ENCODE measurements at regions of chr2 and their contacts with region 1.

Region 1: DNA sequence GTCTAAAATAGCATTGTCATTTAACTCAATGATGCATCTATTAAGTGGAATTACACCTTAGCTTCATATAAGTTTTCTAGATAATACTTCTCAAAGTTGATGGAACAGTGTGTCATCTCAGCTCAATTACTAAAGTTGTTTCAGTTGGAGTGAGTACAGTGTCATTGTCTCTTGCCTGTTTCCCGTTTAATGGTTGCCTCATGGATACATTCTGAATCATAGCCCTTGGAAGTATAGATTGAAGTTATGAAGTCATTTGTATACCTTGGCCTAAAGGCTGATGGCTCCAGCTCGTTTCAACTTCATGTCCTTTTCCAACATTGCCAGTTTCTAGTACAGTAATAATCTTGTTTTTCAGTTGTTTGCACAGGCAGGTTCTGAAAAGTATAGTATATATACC is 130.5 kb upstream of the NOSTRIN start:
- DNase-seq: no peak
- CTCF ChIP-seq: no peak

Region 2: DNA sequence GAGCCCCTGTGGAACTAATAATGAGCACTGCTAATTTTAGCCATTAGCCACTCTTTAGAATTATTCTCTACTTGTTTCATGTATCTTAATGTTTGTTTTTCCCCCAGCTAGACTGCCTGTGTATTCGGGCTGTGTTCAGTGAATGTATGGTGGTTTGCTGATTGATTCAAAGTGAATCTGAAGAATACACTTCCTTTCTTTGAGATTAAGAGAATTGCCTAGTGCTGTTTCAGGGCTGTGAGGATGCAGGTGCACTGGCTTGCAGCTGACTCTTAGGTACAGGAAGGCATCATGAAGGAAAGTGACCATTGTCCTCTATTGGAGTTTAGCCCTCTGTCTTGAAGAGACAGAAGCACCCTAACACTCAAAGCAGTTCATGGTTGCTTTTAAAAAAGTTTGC is 77.2 kb before region 1 on chr2:
- CTCF ChIA-PET with region 1: no interaction called
- POLR2A ChIA-PET with region 1: no interaction called
- DNase-seq: peak; percentile 51
- CTCF ChIP-seq: no peak

Region 3: GRCh38 chr2:168655207-168655606 is 16.7 kb before region 1 on chr2:
- CTCF ChIA-PET with region 1: interaction called, 10 read pairs
- POLR2A ChIA-PET with region 1: no interaction called
- DNase-seq: no peak
- CTCF ChIP-seq: no peak

Region 4: DNA sequence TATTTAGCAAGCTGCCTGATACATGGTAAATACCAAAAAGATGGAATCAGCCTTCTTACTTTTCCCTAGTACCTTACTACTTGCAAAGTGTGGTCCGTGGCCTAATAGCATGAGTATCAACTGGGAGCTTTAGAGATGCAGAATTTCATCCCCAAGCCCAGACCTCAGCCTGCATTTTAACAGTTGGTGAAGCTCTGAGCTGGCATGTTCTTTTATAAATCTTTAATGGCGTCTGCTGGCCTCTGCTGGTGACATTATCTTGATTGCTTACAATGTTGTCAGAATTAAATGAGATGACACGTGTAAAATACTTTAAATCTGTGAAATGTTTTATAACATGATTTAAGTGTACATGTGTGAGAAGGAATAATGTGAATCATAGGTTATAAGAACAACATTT is 15.4 kb after region 1 on chr2:
- CTCF ChIA-PET with region 1: interaction called, 21 read pairs
- POLR2A ChIA-PET with region 1: no interaction called
- DNase-seq: no peak
- CTCF ChIP-seq: peak; percentile 51

Region 5: GRCh38 chr2:168712049-168712448 is 40.1 kb after region 1 on chr2:
- CTCF ChIA-PET with region 1: no interaction called
- POLR2A ChIA-PET with region 1: no interaction called
- DNase-seq: peak; percentile 68
- CTCF ChIP-seq: peak; percentile 36

Measured in GM10248 (cell line).